Activated CD4-positive, alpha-beta T cell treated with anti-CD3 and anti-CD28 coated beads for 36 hours (primary cell): ENCODE measurements at regions of chr4 and their contacts with region 1.

Region 1: GRCh38 chr4:106409893-106410889 is 41.6 kb upstream of the GIMD1 start:
- DNase-seq: no peak
- ATAC-seq: no peak
- H3K4me3 Mint-ChIP-seq: no peak overlapping the region
- H3K27ac Mint-ChIP-seq: no peak overlapping the region
- H3K4me1 Mint-ChIP-seq: no peaks in the 10 kb centered on the region
- H3K27me3 Mint-ChIP-seq: peaks cover 4% of the 10 kb centered on the region

Region 2: GRCh38 chr4:107472276-107472948 is 1062.2 kb after region 1 on chr4:
- CTCF ChIA-PET with region 1: no interaction called
- POLR2A ChIA-PET with region 1: interaction called, 11 read pairs
- intact Hi-C with region 1: no loop called
- DNase-seq: no peak
- ATAC-seq: no peak
- H3K4me3 Mint-ChIP-seq: no peak overlapping the region
- H3K27ac Mint-ChIP-seq: no peak overlapping the region
- H3K4me1 Mint-ChIP-seq: no peaks in the 10 kb centered on the region
- H3K27me3 Mint-ChIP-seq: no peaks in the 10 kb centered on the region